ENCODE measurements at regions of chr11 and their contacts with region 1.

Region 1: GRCh38 chr11:133934599-133935550 is 21.9 kb downstream of the IGSF9B start:
- DNase-seq: peak; percentile 81

Region 2: GRCh38 chr11:133965031-133965601 is 30.2 kb after region 1 on chr11:
- intact Hi-C with region 1: no loop called
- DNase-seq: no peak

Region 3: DNA sequence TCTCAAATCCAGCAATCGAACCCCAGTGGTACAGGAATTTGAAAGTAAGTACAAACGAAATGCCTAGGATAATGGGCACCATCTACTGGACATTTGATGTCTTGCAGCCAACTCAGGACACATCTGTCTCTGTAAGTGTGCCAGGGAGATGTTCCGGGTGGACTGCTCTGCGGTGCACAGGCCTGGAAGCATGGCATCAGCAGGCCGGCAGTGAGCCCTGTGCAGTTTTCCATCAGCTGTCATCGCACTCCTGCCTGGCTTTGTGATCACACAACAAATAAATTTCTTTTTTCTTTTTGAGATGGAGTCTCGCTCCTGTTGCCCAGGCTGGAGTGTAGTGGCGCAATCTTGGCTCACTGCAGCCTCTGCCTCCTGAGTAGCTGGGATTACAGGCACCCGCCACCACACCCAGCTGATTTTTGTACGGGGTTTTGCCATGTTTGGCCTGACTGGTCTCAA is 205.0 kb after region 1 on chr11:
- intact Hi-C with region 1: loop called in 1 of 2 experiments (anchors 5 kb)
- DNase-seq: peak; percentile 81